Activated CD4-positive, alpha-beta T cell treated with anti-CD3 and anti-CD28 coated beads, Interleukin-2, amount 10 ng/mL, durations not matched to agents 24 days and 14 days (primary cell): ENCODE measurements at regions of chr16 and their contacts with region 1.

Region 1: GRCh38 chr16:80759419-80760162 is 44.8 kb downstream of the CDYL2 start:
- DNase-seq: no peak
- H3K4me3 Mint-ChIP-seq: peak overlapping the region; percentile 19
- H3K27ac Mint-ChIP-seq: peak overlapping the region; percentile 85
- H3K4me1 Mint-ChIP-seq: peaks cover 26% of the 10 kb centered on the region
- H3K27me3 Mint-ChIP-seq: no peaks in the 10 kb centered on the region

Region 2: DNA sequence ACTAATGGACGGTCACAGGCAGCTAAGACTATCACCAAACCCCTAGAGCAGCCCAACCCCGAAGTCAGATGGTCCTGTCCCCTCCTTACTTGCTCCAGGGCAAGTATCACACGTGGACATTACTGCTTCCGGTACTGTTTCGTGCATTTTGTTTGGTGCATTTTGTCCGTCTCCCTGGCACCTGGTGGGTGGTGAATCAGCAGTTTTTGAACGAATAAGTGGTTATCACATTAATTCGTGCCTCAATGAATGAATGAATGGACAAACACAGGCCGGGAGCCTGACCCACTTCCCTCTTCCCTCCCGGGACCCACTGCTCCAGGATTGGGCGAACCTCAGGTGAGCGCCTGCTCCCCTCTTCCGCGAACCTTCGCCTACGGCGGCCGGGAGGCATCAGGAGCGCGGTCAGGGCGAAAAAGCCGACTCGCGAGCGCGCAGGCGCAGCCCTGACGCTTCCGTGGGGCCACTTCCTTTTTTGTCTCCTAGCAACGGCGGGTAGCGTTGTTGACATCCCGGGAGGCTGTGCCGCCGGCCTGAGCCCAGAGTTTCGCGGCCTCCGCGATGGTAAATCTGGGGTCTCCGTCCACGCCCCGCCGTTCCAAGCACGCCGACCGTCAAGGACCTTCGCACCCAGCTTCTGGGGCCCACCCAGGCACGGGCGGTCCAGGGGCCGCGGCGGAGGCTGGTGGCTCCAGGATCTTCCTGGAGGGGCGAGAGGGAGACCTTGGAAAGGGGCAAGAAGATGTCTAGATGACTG is 218.9 kb before region 1 on chr16 and contains the start of gene DYNLRB2:
- intact Hi-C with region 1: loop called (anchors 1 kb)
- DNase-seq: peak; percentile 98
- H3K4me3 Mint-ChIP-seq: peak within 1 kb of the TSS; percentile 96
- H3K27ac Mint-ChIP-seq: peak within 1 kb of the TSS; percentile 98
- H3K4me1 Mint-ChIP-seq: peaks cover 32% of the 10 kb centered on the region
- H3K27me3 Mint-ChIP-seq: peaks cover 9% of the 10 kb centered on the region
- total RNA-seq, gene DYNLRB2: not detected in 2 replicates

Region 3: DNA sequence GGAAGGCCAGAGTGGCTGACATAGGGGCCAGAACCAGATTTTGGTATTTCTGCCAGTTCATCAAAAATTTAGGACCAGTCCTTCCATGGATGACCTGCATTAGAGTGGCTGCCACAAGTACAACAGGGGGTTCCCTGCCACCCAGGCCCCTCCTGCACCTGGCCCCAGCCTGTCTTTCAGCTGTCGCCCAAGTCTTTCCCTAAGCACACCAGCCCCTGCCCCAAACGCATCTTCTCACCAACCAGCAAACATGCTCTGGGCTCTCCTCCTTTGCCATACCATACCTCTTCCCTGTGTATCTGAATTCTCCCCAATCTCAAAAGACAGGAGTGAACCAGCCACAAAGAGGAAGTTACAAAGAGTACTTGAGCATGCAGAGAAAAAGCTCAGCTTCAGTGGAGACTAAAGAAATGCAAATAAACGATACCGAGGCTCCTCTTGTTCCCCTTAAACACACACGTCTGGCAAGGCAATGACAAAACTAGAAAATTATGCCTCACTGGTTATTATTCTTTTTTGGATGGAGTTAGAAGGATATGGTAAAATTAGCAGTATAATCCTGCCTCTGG is 88.2 kb before region 1 on chr16:
- intact Hi-C with region 1: loop called (anchors 1 kb)
- DNase-seq: peak; percentile 47
- H3K4me3 Mint-ChIP-seq: no peak overlapping the region
- H3K27ac Mint-ChIP-seq: no peak overlapping the region
- H3K4me1 Mint-ChIP-seq: peaks cover 29% of the 10 kb centered on the region
- H3K27me3 Mint-ChIP-seq: no peaks in the 10 kb centered on the region

Region 4: DNA sequence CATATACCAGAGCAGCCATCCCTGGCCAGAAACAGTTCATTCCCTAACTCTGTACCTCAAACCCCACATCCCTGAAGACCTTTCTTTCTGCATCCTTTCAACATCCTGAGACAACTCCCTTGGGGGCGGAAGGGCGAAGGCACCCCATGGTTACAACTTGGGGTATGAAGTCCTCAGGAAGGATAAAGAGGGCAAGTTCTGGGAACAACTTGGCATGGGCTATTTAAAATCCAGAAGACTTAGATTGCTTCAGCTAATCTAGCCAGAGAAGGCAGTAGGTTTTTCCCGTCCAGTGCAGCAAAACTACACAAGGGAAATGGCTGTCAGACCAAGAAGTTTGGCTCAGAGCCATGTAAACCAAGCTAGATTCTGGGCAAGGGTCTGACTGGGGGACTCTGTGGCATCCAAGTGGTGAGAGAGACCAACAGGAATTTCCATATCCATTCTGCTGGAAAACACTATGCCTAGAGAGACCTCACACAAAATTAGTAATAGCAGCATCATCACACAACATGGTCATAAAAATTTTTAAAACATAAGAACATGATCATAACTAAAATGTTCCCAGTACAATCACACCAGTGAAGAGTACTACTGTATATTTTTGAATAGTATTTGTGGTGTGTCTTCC is 68.4 kb before region 1 on chr16:
- intact Hi-C with region 1: loop called (anchors 5 kb)
- DNase-seq: no peak
- H3K4me3 Mint-ChIP-seq: no peak overlapping the region
- H3K27ac Mint-ChIP-seq: no peak overlapping the region
- H3K4me1 Mint-ChIP-seq: peaks cover 64% of the 10 kb centered on the region
- H3K27me3 Mint-ChIP-seq: no peaks in the 10 kb centered on the region

Region 5: DNA sequence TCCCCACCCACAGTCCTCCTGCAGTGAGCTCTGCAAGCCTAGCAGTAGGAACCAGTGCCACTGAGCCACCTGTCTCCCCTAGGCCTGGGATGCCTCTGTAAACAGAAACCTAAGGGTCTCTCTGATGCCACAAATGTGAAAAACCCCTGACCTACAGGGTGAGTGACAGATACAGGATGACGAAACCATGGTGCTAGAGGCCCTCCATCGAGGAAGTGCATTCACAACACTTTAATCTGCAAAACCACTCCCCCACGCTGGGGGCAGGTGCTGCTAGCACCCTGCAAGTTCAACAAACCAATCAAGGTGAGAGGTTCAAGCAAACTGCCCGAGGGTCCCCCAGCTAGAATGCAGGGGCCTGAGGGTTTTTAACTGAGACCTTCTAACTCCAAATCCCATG is 14.7 kb before region 1 on chr16:
- intact Hi-C with region 1: loop called (anchors 1 kb)
- DNase-seq: peak; percentile 59
- H3K4me3 Mint-ChIP-seq: no peak overlapping the region
- H3K27ac Mint-ChIP-seq: no peak overlapping the region
- H3K4me1 Mint-ChIP-seq: peaks cover 43% of the 10 kb centered on the region
- H3K27me3 Mint-ChIP-seq: no peaks in the 10 kb centered on the region